ENCODE measurements at regions of chr19 and their contacts with region 1.

Region 1: DNA sequence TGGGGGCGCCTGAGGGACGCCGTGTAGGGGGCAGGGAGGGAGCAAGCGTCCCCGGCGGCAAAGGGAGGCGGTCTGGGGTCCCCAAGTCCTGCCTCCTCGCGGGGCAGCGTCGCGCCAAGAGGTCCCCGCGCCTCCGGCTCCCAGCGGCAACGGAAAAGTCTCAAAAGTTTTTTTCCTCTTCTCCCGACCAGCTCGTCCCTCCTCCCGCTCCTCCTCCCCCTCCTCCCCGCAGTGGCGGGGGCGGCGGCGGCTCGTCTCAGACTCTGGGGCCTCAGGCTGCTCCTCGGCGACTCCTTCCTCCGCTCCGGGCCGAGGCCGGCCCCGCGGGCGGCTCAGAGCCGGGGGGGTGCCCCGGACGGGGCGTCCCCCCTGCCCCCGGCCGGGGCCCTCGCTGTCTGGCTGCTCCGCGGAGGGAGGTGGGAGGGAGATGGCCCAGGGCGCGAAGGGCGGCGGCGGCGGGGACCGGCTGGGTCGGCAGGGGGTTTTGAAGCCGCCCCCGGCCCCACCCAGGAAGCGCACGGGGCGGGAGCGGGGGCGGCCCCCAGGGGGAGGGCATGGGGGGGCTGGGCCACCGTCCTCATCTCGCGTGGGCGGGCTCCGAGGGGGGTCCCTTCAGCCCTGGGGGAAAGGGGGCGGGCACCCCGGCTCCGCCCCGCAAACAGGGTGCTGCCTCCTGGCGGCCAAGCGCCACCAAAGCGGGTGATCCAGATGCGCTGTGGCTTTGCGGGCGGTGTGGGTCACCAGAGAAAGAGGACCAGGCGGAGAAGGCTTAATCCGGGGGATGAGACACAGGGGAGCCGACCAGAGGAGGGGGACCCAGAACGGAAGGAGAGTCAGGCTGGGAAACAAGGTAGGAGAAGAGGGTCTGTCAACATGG is at the start of gene TGFB1:
- DNase-seq: peak; percentile 78
- ATAC-seq: peak; percentile 53
- H3K4me3 Mint-ChIP-seq: peak within 1 kb of the TSS; percentile 89
- H3K27ac Mint-ChIP-seq: no peak within 1 kb of the TSS
- H3K4me1 Mint-ChIP-seq: peaks cover 18% of the 10 kb centered on the region
- H3K27me3 Mint-ChIP-seq: peaks cover 57% of the 10 kb centered on the region
- CTCF ChIP-seq: peak; percentile 81
- total RNA-seq, gene TGFB1: 10.4 to 11.8 TPM (median 11.0 TPM) in 3 replicates

Region 2: GRCh38 chr19:41308392-41309179 is 45.1 kb before region 1 on chr19:
- CTCF ChIA-PET with region 1: interaction called, 12 read pairs
- POLR2A ChIA-PET with region 1: no interaction called
- DNase-seq: peak; percentile 99
- ATAC-seq: peak; percentile 66
- H3K4me3 Mint-ChIP-seq: peak overlapping the region; percentile 96
- H3K27ac Mint-ChIP-seq: peak overlapping the region; percentile 96
- H3K4me1 Mint-ChIP-seq: peaks cover 21% of the 10 kb centered on the region
- H3K27me3 Mint-ChIP-seq: no peaks in the 10 kb centered on the region
- CTCF ChIP-seq: peak; percentile 98

Region 3: DNA sequence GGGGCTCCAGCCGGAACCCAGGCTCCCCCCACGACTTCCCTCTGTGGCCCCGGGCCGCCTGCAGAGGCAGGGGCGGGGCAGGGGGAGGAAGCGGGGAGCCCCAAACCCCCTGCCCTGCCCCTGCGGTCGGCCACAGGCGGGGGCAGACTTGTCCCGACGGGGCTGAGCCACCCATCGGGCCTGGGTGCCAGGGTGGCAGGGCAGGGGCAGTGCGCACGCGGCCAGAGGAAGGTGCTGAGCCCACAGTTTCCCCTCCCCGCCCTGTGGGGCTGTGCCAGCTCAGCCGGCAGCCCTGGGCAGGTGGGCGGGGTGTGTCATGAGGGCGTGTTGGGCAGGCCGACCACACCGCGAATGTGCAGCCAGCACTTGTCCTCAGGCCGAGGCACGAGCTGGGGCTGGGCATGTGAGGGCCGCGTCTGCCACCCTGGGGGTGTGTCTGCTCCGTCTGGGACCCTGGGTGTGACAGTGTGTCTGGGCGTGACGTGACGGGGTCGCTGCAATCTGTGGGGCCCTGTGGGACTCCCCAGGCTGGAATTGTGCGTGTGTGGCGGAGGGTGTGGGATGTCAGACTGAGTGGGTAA is 26.0 kb before region 1 on chr19:
- CTCF ChIA-PET with region 1: interaction called, 66 read pairs
- POLR2A ChIA-PET with region 1: interaction called, 4 read pairs
- DNase-seq: peak; percentile 40
- ATAC-seq: peak; percentile 9
- H3K4me3 Mint-ChIP-seq: peak overlapping the region; percentile 43
- H3K27ac Mint-ChIP-seq: peak overlapping the region; percentile 46; the same call in 1 of the 2 replicates
- H3K4me1 Mint-ChIP-seq: peaks cover 62% of the 10 kb centered on the region
- H3K27me3 Mint-ChIP-seq: peaks cover 16% of the 10 kb centered on the region
- CTCF ChIP-seq: no peak

Region 4: DNA sequence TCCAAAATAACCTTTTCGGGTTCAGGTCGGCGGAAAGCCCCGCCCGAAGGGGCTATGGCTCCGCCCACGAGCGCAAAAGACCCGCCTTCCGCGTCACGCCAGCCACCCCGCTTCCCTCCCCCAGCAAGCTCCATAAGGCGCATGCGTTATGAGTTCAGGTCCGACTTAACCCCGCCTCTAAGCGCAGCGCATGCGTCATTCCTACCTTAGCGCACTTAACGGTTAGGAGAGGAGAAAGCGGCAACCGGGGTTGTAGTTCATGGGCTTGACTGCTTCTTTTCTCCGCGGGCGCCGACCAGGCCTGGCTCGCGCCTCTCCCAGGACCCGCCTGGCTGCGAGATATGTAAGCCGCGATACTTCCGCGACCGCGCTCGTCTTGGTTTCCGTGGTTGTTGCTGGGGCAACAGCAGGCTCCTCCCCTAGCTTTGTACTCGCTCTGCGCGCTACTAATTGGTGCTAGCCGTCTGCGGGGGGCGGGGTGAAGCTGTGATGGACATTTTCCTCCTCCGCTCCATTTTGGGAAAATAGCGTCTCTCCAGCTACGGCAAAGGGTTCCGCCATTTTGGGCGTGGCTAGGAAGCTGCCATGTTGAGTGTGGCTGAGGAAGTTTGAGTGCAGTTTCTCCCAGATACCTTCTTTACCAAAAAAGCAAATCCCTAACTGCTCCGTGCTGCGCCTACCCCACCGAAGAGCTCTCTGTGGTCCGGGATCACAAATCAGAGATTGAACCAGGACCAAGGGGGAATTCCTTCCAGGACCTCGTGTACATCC is 10.2 kb after region 1 on chr19 and contains the start of gene B9D2:
- CTCF ChIA-PET with region 1: interaction called, 103 read pairs
- POLR2A ChIA-PET with region 1: interaction called, 4 read pairs
- DNase-seq: peak; percentile 98
- ATAC-seq: peak; percentile 96
- H3K4me3 Mint-ChIP-seq: peak within 1 kb of the TSS; percentile 90
- H3K27ac Mint-ChIP-seq: peak within 1 kb of the TSS; percentile 97
- H3K4me1 Mint-ChIP-seq: peaks cover 6% of the 10 kb centered on the region; the same call in 1 of the 2 replicates
- H3K27me3 Mint-ChIP-seq: no peaks in the 10 kb centered on the region
- CTCF ChIP-seq: no peak
- total RNA-seq, gene B9D2: 4.5 to 6.3 TPM (median 4.7 TPM) in 3 replicates

Region 5: DNA sequence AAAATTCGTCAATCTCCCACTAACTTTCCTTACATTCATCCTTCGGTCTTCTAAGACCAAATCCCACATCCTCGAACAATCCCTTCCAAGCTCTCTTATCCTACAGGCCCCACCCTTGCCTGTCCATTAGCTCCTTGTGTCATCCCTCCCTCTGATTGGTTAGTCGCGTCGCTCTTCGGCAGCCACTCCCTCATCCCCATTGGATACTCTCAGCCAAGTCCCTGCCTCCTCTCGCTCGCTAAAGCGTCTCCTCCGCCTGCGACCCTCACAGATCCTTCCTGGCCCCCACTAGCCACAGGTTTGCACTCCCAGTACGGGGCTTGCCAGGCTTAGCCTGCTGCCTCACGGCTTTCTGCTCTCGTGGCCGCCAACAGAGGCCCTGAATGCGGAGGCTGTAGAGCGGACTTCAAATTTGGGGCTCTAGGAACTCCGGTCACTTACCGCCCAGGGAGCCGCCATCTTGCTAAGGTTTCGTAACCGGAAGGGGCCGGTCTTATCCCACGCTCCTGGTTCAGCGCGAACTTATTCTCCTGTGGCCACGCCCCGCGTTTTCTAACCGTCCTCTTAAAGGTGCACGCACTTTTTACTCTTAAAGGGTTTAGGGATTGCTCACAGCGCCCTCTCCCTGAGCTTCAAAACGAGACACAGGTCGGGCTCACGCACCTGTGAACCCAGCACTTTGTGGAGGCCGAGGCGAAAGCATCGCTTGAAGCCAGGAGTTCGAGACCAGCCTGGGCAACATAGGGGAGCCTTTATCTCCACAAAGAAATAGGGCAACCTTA is 85.9 kb after region 1 on chr19 and contains the start of gene DMAC2:
- CTCF ChIA-PET with region 1: interaction called, 15 read pairs
- POLR2A ChIA-PET with region 1: no interaction called
- DNase-seq: peak; percentile 97
- ATAC-seq: peak; percentile 98
- H3K4me3 Mint-ChIP-seq: no peak within 1 kb of the TSS
- H3K27ac Mint-ChIP-seq: no peak within 1 kb of the TSS
- H3K4me1 Mint-ChIP-seq: peaks cover 13% of the 10 kb centered on the region
- H3K27me3 Mint-ChIP-seq: peaks cover 17% of the 10 kb centered on the region; the same call in 1 of the 2 replicates
- CTCF ChIP-seq: no peak
- total RNA-seq, gene DMAC2: 77.6 to 85.6 TPM (median 82.6 TPM) in 3 replicates

Region 6: DNA sequence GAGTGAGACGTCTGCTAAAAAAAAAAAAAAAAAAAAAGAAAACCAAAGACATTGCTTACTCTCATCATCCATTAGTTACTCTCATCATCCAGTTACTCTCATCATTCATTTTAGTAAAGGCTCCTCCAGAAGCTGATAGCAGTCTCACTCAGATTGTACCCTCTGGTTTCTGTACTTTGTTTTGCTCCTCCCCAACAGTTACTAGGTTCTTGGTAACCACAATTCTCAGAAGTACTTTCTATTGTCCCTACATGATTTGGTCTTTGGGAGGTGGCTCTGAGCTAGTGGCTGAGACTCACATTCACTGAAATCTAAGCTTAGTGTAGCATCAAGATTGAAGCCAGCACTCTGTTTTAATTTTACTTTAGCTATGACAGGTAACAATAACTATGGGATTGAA is 103.5 kb after region 1 on chr19:
- CTCF ChIA-PET with region 1: no interaction called
- POLR2A ChIA-PET with region 1: no interaction called
- DNase-seq: no peak
- ATAC-seq: no peak
- H3K4me3 Mint-ChIP-seq: no peak overlapping the region
- H3K27ac Mint-ChIP-seq: no peak overlapping the region
- H3K4me1 Mint-ChIP-seq: no peaks in the 10 kb centered on the region
- H3K27me3 Mint-ChIP-seq: peaks cover 58% of the 10 kb centered on the region
- CTCF ChIP-seq: no peak

Region 7: DNA sequence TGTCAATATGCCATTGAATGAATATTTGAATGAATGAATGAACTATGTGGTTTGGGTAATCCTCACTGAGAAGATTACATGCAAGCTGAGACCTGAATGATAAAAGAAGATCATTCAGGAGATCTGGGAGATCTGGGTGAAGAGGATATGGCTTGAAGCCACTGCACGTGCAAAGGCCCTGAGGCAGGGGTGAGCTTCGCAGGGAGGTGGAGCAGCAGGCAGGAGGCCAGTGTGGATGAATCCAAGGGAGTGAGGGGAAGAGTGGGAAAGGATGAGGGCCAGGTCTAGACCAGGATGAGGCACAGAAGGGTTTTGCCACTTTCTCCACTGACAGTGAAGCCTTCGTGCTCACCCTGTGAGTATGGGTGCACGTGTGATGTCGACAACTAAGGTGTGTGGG is 139.1 kb after region 1 on chr19:
- CTCF ChIA-PET with region 1: no interaction called
- POLR2A ChIA-PET with region 1: no interaction called
- DNase-seq: no peak
- ATAC-seq: no peak
- H3K4me3 Mint-ChIP-seq: no peak overlapping the region
- H3K27ac Mint-ChIP-seq: no peak overlapping the region
- H3K4me1 Mint-ChIP-seq: no peaks in the 10 kb centered on the region
- H3K27me3 Mint-ChIP-seq: peaks cover 54% of the 10 kb centered on the region
- CTCF ChIP-seq: no peak

Measured in WTC11 (cell line).